ENCODE measurements at regions of chrX and their contacts with region 1.

Region 1: GRCh38 chrX:38985375-38985774 is 184.1 kb downstream of the MID1IP1 start:
- DNase-seq: no peak
- ATAC-seq: no peak
- H3K4me3 ChIP-seq: no peak overlapping the region
- H3K27ac ChIP-seq: no peak overlapping the region
- H3K4me1 ChIP-seq: peaks cover 56% of the 10 kb centered on the region
- H3K27me3 ChIP-seq: no peaks in the 10 kb centered on the region
- CTCF ChIP-seq: no peak
- EP300 ChIP-seq: no peak
- POLR2A ChIP-seq: no peak
- RAD21 ChIP-seq: no peak

Region 2: DNA sequence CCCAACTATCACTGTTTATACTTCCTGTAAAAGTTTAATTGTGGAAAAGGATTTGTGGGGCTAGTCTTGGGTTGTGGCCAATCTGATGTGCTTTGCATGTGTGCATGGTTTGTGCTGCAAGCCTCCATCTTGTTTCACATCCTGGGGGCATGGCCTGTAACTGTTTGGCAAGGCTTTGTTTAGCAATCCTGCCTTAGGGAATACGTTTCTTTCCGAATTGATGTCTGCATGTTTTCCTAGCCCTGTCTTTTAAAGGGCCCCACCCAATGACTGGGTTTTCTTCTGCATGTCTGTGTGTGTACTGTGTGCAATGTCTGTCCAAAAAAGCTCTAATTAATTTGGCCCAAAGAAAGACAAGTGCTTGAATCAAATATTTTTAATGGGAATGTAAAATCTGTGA is 258.8 kb before region 1 on chrX:
- CTCF ChIA-PET with region 1: no interaction called
- POLR2A ChIA-PET with region 1: no interaction called
- in situ Hi-C with region 1: no loop called
- intact Hi-C with region 1: no loop called
- DNase-seq: no peak
- ATAC-seq: no peak
- H3K4me3 ChIP-seq: no peak overlapping the region
- H3K27ac ChIP-seq: no peak overlapping the region
- H3K4me1 ChIP-seq: no peaks in the 10 kb centered on the region
- H3K27me3 ChIP-seq: no peaks in the 10 kb centered on the region
- CTCF ChIP-seq: no peak
- EP300 ChIP-seq: no peak
- POLR2A ChIP-seq: no peak
- RAD21 ChIP-seq: no peak

Region 3: DNA sequence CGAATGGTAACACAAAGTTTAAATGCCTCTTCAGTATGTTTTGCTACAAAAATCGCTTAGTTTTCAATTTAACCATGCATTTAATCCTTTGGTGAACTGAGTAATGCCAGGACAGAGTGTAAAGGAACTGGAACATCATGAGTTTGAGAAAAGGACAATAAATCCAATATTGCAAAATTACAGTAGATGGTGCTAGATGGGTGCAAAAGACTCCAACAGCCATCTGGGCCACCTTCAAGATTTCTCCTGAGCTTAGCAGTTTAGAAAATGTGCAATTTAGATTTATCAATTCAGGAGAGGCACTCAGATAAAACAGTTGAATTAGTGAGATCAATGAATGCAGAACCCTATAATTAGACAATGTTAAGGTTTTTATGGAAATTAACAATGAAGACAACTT is 217.3 kb before region 1 on chrX:
- CTCF ChIA-PET with region 1: no interaction called
- POLR2A ChIA-PET with region 1: no interaction called
- in situ Hi-C with region 1: no loop called
- intact Hi-C with region 1: loop called (anchors 10 kb)
- DNase-seq: no peak
- ATAC-seq: no peak
- H3K4me3 ChIP-seq: no peak overlapping the region
- H3K27ac ChIP-seq: no peak overlapping the region
- H3K4me1 ChIP-seq: no peaks in the 10 kb centered on the region
- H3K27me3 ChIP-seq: no peaks in the 10 kb centered on the region; a peak in 1 of 5 replicates
- CTCF ChIP-seq: peak; percentile 33
- EP300 ChIP-seq: no peak
- POLR2A ChIP-seq: no peak
- RAD21 ChIP-seq: no peak